Activated CD8-positive, alpha-beta T cell treated with anti-CD3 and anti-CD28 coated beads for 36 hours (primary cell): ENCODE measurements at regions of chr5 and their contacts with region 1.

Region 1: DNA sequence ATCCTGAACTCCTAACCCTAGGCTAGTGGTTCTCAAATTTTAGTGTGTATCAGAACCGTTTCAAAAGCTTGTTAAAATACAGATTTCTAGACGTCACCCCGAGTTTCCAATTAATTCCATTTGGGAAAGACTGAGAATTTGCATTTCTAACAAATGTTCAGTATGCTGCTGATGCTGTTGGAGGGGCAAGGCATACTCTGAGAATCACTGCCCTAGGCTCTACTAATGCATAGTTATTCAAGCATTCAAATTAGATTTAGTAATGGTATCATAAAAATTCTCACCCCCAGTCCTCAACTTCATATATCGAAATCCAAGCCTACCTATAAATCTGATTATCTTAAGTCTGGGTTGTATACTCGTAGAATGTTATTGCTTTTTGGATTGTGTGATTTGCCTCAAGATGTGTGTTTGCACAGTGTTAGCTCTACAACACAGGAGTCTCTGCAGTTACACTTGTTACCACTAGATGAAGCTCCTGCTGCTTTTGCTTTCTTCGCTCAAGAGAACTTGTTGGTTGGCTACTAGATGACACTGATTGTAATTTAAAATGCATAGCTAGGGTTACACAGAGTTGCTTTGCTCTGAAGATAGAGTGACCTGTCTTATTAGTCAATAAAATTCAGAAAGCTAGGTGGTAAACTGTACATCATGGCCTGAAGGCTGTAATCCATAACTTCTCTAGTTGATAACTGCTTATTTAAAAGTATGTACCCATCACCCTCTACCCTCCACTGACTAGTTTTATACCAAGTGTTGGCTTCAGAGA is 7.5 kb upstream of the ERAP2 start:
- DNase-seq: peak; percentile 34
- ATAC-seq: peak; percentile 88
- H3K4me3 Mint-ChIP-seq: no peak overlapping the region
- H3K27ac Mint-ChIP-seq: peak overlapping the region; percentile 87
- H3K4me1 Mint-ChIP-seq: peaks cover 44% of the 10 kb centered on the region
- H3K27me3 Mint-ChIP-seq: no peaks in the 10 kb centered on the region
- CTCF ChIP-seq: peak; percentile 87

Region 2: GRCh38 chr5:96816411-96816939 is 52.3 kb before region 1 on chr5:
- CTCF ChIA-PET with region 1: interaction called, 27 read pairs
- POLR2A ChIA-PET with region 1: interaction called, 3 read pairs
- intact Hi-C with region 1: no loop called
- DNase-seq: peak; percentile 84
- ATAC-seq: peak; percentile 94
- H3K4me3 Mint-ChIP-seq: peak overlapping the region; percentile 68
- H3K27ac Mint-ChIP-seq: peak overlapping the region; percentile 92
- H3K4me1 Mint-ChIP-seq: peaks cover 81% of the 10 kb centered on the region
- H3K27me3 Mint-ChIP-seq: no peaks in the 10 kb centered on the region
- CTCF ChIP-seq: no peak

Region 3: GRCh38 chr5:96896806-96897205 is 28.0 kb after region 1 on chr5:
- CTCF ChIA-PET with region 1: interaction called, 47 read pairs
- POLR2A ChIA-PET with region 1: interaction called, 6 read pairs
- intact Hi-C with region 1: no loop called
- DNase-seq: peak; percentile 53
- ATAC-seq: peak; percentile 63
- H3K4me3 Mint-ChIP-seq: peak overlapping the region; percentile 75
- H3K27ac Mint-ChIP-seq: peak overlapping the region; percentile 95
- H3K4me1 Mint-ChIP-seq: peaks cover 60% of the 10 kb centered on the region
- H3K27me3 Mint-ChIP-seq: no peaks in the 10 kb centered on the region
- CTCF ChIP-seq: no peak

Region 4: GRCh38 chr5:96934708-96935558 is 66.1 kb after region 1 on chr5:
- CTCF ChIA-PET with region 1: interaction called, 30 read pairs
- POLR2A ChIA-PET with region 1: interaction called, 7 read pairs
- intact Hi-C with region 1: no loop called
- DNase-seq: peak; percentile 95
- ATAC-seq: peak; percentile 73
- H3K4me3 Mint-ChIP-seq: peak overlapping the region; percentile 82
- H3K27ac Mint-ChIP-seq: peak overlapping the region; percentile 99
- H3K4me1 Mint-ChIP-seq: peaks cover 51% of the 10 kb centered on the region
- H3K27me3 Mint-ChIP-seq: no peaks in the 10 kb centered on the region
- CTCF ChIP-seq: no peak

Region 5: DNA sequence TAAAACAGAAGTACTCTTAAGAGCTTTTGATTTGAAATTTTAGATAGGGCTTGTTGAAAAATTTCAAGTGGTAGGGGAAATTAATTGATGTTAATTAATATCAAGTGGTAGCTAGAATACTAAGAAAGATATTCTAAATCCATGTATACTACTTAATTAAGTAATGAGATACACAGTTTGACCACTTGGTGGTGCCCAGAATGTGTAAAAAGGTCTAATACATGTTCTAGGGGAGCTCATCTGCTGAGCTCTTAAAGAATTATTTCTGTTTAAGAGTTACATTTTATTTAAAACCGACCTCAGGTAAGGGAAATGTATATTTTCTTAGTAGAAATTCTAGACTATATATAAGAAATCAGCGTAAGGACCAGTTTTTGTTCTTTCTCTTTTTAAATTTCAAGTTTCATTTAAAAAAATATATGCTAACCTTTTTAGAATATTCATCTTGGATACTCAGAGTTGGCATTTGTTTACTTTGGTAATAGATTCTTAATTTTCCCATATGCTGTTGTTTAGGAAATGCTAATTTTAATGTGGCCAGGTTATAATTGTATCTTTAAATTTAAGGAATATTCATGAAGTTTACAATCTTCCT is 128.6 kb after region 1 on chr5:
- CTCF ChIA-PET with region 1: interaction called, 24 read pairs
- POLR2A ChIA-PET with region 1: no interaction called
- intact Hi-C with region 1: no loop called
- DNase-seq: peak; percentile 49
- ATAC-seq: peak; percentile 77
- H3K4me3 Mint-ChIP-seq: no peak overlapping the region
- H3K27ac Mint-ChIP-seq: no peak overlapping the region
- H3K4me1 Mint-ChIP-seq: peaks cover 31% of the 10 kb centered on the region
- H3K27me3 Mint-ChIP-seq: no peaks in the 10 kb centered on the region
- CTCF ChIP-seq: peak; percentile 60

Region 6: DNA sequence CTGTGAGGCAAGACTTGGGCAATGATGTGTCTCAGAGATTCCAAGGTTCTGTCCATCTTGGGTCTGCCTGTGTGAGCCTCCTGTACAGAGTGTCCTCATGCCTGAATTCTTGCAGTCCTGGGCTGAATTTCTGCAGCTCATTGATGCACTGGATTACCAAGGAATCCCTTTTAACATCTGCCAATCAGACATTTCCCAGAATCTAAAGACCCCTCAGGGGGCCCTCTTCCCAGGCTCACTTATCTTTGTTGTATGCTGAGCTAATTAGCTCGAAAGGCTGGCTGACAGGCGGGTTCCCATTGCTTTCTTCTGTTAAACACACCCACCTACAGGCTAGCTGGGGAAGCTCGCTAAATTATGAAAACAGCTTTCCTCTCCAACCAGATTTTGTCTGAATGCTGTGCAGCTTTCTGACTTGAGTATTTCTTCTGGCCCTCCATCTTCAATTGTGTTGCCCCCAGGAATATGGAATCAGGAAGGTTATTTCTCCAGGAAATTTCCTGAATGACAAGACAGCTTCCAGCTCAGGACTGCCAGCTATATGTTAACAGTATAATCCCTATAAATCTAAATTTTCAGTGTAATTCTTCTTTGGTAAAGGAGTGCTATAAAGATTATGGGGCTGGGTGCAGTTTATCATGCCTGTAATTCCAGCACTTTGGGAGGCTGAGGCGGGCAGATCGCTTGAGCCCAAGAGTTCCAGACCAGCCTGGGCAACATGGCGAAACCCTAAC is 273.9 kb after region 1 on chr5 and contains the start of gene LIX1:
- CTCF ChIA-PET with region 1: interaction called, 34 read pairs
- POLR2A ChIA-PET with region 1: no interaction called
- intact Hi-C with region 1: loop called (anchors 5 kb)
- DNase-seq: peak; percentile 57
- ATAC-seq: peak; percentile 86
- H3K4me3 Mint-ChIP-seq: no peak within 1 kb of the TSS
- H3K27ac Mint-ChIP-seq: no peak within 1 kb of the TSS
- H3K4me1 Mint-ChIP-seq: no peaks in the 10 kb centered on the region
- H3K27me3 Mint-ChIP-seq: peaks cover 8% of the 10 kb centered on the region
- CTCF ChIP-seq: peak; percentile 63
- total RNA-seq, gene LIX1: not detected